Activated CD4-positive, alpha-beta T cell treated with anti-CD3 and anti-CD28 coated beads for 36 hours (primary cell): ENCODE measurements at regions of chr10 and their contacts with region 1.

Region 1: GRCh38 chr10:6382081-6382480 is 179.3 kb downstream of the PFKFB3 start:
- DNase-seq: peak; percentile 66
- ATAC-seq: peak; percentile 82
- H3K4me3 Mint-ChIP-seq: peak overlapping the region; percentile 60
- H3K27ac Mint-ChIP-seq: peak overlapping the region; percentile 86
- H3K4me1 Mint-ChIP-seq: peaks cover 24% of the 10 kb centered on the region
- H3K27me3 Mint-ChIP-seq: no peaks in the 10 kb centered on the region

Region 2: GRCh38 chr10:6321880-6322279 is 60.2 kb before region 1 on chr10:
- CTCF ChIA-PET with region 1: no interaction called
- POLR2A ChIA-PET with region 1: no interaction called
- intact Hi-C with region 1: no loop called
- DNase-seq: peak; percentile 28
- ATAC-seq: peak; percentile 49
- H3K4me3 Mint-ChIP-seq: no peak overlapping the region
- H3K27ac Mint-ChIP-seq: no peak overlapping the region
- H3K4me1 Mint-ChIP-seq: no peaks in the 10 kb centered on the region
- H3K27me3 Mint-ChIP-seq: no peaks in the 10 kb centered on the region

Region 3: DNA sequence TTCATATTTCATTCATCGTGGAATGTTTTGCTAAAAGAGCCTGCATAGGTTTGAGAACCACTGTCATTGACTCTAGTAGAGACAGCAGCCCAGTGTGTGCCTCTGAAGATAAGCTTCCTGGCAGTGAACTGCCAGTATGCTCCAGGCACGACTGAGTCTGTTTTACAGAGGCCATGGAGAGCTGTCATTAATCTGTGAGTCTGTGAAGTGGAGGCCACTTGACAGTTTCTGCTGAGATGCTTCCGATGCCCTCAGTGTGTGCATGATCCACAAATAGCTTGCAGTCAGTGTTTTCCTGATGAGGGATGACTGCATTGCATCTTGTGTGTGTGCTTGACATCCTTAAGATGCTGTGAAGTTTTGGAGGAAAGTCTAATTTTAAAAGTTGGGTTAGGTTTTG is 17.2 kb before region 1 on chr10:
- CTCF ChIA-PET with region 1: interaction called, 14 read pairs
- POLR2A ChIA-PET with region 1: interaction called, 3 read pairs
- intact Hi-C with region 1: no loop called
- DNase-seq: no peak
- ATAC-seq: no peak
- H3K4me3 Mint-ChIP-seq: no peak overlapping the region
- H3K27ac Mint-ChIP-seq: no peak overlapping the region
- H3K4me1 Mint-ChIP-seq: no peaks in the 10 kb centered on the region
- H3K27me3 Mint-ChIP-seq: no peaks in the 10 kb centered on the region

Region 4: GRCh38 chr10:7161484-7162250 is 779.6 kb after region 1 on chr10:
- CTCF ChIA-PET with region 1: no interaction called
- POLR2A ChIA-PET with region 1: no interaction called
- intact Hi-C with region 1: no loop called
- DNase-seq: no peak
- ATAC-seq: no peak
- H3K4me3 Mint-ChIP-seq: no peak overlapping the region
- H3K27ac Mint-ChIP-seq: no peak overlapping the region
- H3K4me1 Mint-ChIP-seq: peaks cover 26% of the 10 kb centered on the region
- H3K27me3 Mint-ChIP-seq: no peaks in the 10 kb centered on the region